Endothelial cell of umbilical vein (primary cell): ENCODE measurements at regions of chr1 and their contacts with region 1.

Region 1: GRCh38 chr1:36223993-36224536 is at the start of gene THRAP3:
- DNase-seq: peak; percentile 100
- H3K4me3 ChIP-seq: peak within 1 kb of the TSS; percentile 74 to 99 (median 78)
- H3K27ac ChIP-seq: peak within 1 kb of the TSS; percentile 89
- H3K4me1 ChIP-seq: peaks cover 17% of the 10 kb centered on the region
- H3K27me3 ChIP-seq: no peaks in the 10 kb centered on the region
- CTCF ChIP-seq: no peak
- POLR2A ChIP-seq: peak; percentile 93
- total RNA-seq, gene THRAP3: 130 and 144 TPM in 2 replicates

Region 2: GRCh38 chr1:36239941-36240637 is 16.0 kb after region 1 on chr1:
- CTCF ChIA-PET with region 1: interaction called, 7 read pairs
- POLR2A ChIA-PET with region 1: interaction called, 13 read pairs
- dilution Hi-C with region 1: no loop called
- intact Hi-C with region 1: no loop called
- DNase-seq: no peak
- H3K4me3 ChIP-seq: no peak overlapping the region
- H3K27ac ChIP-seq: no peak overlapping the region
- H3K4me1 ChIP-seq: no peaks in the 10 kb centered on the region
- H3K27me3 ChIP-seq: no peaks in the 10 kb centered on the region
- CTCF ChIP-seq: no peak
- POLR2A ChIP-seq: no peak